BJ (cell line): ENCODE measurements at regions of chr11 and their contacts with region 1.

Region 1: DNA sequence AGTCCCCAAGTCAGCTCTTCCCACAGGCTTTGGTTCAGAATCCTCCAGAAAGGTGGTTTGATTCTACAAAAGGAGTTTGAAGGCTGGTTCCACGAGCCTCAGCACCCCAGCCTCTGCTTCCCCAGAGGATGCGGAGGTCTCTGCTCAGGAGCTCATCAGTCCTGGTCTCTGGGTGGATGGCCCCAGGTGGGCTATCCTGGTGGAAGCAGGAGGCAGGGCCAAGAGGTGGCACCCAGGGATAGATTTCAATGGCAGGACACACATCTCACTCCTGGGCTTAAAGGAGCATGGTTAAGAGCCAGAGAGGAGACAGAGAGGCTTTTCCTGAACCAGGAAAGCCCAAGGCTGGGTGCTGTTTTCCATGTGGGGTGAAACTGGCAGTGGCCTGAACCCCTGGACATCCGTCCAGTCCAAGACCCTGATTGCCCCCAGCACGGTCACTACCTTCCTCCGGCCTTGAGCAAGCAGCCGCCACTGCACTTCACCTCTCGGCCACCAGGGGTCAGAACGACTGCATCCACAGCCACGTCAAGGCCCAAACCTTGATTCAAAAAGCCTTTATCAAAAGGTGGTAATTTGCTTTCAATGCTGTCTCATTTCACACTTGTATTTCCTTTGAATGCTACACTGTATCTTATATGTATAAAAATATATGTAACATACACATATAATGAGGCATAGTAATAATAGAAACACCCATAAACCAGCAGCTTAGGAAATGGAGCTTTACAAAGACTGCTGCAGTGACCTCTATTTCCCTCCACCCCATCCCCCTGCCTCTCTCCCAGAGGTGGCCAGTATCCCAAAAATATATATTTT is 19.3 kb upstream of the FXYD2 start:
- DNase-seq: no peak
- H3K4me3 ChIP-seq: no peak overlapping the region
- H3K27me3 ChIP-seq: peaks cover 2% of the 10 kb centered on the region; the same call in 1 of the 2 replicates
- CTCF ChIP-seq: peak; percentile 95

Region 2: DNA sequence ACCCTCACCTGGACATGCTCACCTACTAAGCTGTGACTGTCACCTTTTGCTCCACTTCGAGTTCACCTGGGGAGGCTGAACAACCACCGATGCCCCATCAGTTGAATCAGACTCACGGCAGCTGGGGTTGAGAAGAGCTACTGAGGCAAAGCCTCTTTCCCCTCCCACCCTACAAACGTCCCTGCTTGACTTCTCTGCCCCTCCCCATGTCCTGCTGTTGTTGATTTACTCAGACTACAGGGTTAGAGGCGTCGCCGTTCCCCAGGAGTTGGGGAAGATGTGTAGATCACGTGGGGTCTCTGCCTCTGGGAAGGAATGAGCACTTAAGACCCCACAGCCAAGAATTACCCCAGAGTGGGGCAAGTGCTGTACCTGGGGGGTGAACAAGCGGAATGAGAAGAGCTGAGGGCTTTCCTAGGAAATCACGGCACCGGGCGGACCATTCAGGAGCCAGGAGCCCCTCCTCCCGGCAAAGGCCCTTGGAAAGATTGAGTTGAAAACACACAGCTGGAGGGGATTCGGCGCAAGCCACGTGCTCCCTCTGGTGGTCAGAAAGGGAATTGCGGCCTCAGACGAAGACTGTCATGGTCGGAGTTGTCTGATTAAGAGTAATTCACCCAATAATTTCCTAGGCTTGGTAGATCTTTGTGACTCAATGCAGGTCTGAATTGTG is 26.4 kb before region 1 on chr11:
- CTCF ChIA-PET with region 1: interaction called, 14 read pairs
- POLR2A ChIA-PET with region 1: no interaction called
- DNase-seq: peak; percentile 4
- H3K4me3 ChIP-seq: no peak overlapping the region
- H3K27me3 ChIP-seq: no peaks in the 10 kb centered on the region
- CTCF ChIP-seq: peak; percentile 99

Region 3: GRCh38 chr11:117828611-117829368 is 15.1 kb before region 1 on chr11:
- CTCF ChIA-PET with region 1: interaction called, 19 read pairs
- POLR2A ChIA-PET with region 1: no interaction called
- DNase-seq: no peak
- H3K4me3 ChIP-seq: no peak overlapping the region
- H3K27me3 ChIP-seq: peaks cover 2% of the 10 kb centered on the region
- CTCF ChIP-seq: no peak

Region 4: GRCh38 chr11:117855912-117856651 is 12.2 kb after region 1 on chr11:
- CTCF ChIA-PET with region 1: interaction called, 21 read pairs
- POLR2A ChIA-PET with region 1: no interaction called
- DNase-seq: no peak
- H3K4me3 ChIP-seq: no peak overlapping the region
- H3K27me3 ChIP-seq: peaks cover 2% of the 10 kb centered on the region
- CTCF ChIP-seq: no peak

Region 5: DNA sequence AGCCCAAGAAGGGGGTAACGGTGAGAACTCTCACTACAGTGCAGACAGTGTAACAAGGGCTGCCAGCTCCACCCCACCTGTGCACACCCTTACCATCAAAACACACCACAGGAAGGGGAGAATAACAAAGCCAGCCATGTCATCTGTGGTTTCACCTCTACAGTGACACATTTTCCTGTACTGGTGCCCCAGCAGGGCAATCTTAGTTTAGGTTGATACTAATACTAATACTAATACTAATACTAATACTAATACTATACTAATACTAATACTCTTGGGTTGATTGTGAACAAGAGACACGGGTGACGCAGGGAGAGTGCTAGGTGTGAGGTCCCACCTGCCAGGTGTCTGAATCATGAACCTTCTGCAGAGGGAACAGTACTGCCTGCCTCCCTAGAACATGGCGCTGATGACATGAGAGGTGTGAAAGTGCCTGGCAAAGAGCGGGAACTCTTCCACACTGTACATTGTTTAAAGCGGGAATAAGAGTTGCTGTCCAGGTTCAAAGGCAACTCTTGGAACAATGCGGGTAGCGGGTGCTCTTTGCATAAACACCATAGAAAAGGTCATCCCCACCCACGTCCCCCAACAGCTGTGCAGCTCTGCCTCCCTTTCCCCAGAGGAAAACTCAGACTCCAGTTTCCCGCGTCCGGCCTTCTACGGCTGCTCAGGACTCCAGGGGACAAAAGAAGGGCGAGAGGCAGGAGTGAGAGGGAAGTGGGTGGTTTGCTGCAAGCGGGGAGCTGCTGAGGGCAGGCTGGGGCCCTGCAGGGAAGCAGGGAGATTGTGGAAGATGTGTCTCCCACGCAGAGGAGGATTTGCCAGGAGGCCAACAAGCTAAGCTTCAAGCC is 208.0 kb after region 1 on chr11:
- CTCF ChIA-PET with region 1: interaction called, 10 read pairs
- POLR2A ChIA-PET with region 1: no interaction called
- DNase-seq: no peak
- H3K4me3 ChIP-seq: no peak overlapping the region
- H3K27me3 ChIP-seq: peaks cover 2% of the 10 kb centered on the region
- CTCF ChIP-seq: no peak